ENCODE measurements at regions of chr5 and their contacts with region 1.

Region 1: DNA sequence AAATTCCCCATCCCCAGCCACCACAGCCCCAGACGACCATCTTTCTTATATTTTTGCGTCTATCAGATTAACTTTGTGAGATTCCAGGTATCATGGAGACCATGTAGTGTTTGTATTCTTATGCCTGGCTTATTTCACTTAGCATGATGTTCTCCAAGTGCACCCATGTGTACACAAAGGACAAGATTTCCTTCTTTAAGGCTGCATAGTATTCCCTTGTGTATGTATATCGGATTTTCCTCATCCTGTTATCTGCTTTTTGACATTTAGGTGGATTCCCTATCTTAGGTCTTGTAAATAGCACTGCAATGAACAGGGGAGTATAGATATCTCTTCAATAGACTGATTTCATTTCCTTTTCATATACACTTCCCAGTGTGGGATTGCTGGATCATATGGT is 5.3 kb upstream of the TAF11L2 start:
- DNase-seq: no peak
- ATAC-seq: no peak
- H3K4me3 ChIP-seq: no peak overlapping the region
- H3K27ac ChIP-seq: no peak overlapping the region
- H3K4me1 ChIP-seq: no peaks in the 10 kb centered on the region
- H3K27me3 ChIP-seq: no peaks in the 10 kb centered on the region
- CTCF ChIP-seq: no peak

Region 2: GRCh38 chr5:17288570-17288969 is 204.2 kb before region 1 on chr5:
- CTCF ChIA-PET with region 1: no interaction called
- POLR2A ChIA-PET with region 1: interaction called, 11 read pairs
- in situ Hi-C with region 1: no loop called
- intact Hi-C with region 1: no loop called
- DNase-seq: no peak
- ATAC-seq: no peak
- H3K4me3 ChIP-seq: no peak overlapping the region
- H3K27ac ChIP-seq: no peak overlapping the region
- H3K4me1 ChIP-seq: no peaks in the 10 kb centered on the region
- H3K27me3 ChIP-seq: no peaks in the 10 kb centered on the region
- CTCF ChIP-seq: no peak

Region 3: GRCh38 chr5:17796142-17796541 is 303.4 kb after region 1 on chr5:
- CTCF ChIA-PET with region 1: no interaction called
- POLR2A ChIA-PET with region 1: interaction called, 20 read pairs
- in situ Hi-C with region 1: no loop called
- intact Hi-C with region 1: no loop called
- DNase-seq: no peak
- ATAC-seq: no peak
- H3K4me3 ChIP-seq: no peak overlapping the region
- H3K27ac ChIP-seq: no peak overlapping the region
- H3K4me1 ChIP-seq: no peaks in the 10 kb centered on the region
- H3K27me3 ChIP-seq: no peaks in the 10 kb centered on the region
- CTCF ChIP-seq: no peak

Measured in Panc1 (cell line).